PC-9 (cell line): ENCODE measurements at regions of chr11 and their contacts with region 1.

Region 1: GRCh38 chr11:81497202-81497804 is 1236.4 kb downstream of the FAM181B start:
- DNase-seq: peak; percentile 2 to 40
- H3K4me3 ChIP-seq: no peak overlapping the region
- H3K27ac ChIP-seq: no peak overlapping the region
- H3K4me1 ChIP-seq: no peaks in the 10 kb centered on the region
- H3K27me3 ChIP-seq: no peaks in the 10 kb centered on the region
- CTCF ChIP-seq: peak; percentile 91

Region 2: DNA sequence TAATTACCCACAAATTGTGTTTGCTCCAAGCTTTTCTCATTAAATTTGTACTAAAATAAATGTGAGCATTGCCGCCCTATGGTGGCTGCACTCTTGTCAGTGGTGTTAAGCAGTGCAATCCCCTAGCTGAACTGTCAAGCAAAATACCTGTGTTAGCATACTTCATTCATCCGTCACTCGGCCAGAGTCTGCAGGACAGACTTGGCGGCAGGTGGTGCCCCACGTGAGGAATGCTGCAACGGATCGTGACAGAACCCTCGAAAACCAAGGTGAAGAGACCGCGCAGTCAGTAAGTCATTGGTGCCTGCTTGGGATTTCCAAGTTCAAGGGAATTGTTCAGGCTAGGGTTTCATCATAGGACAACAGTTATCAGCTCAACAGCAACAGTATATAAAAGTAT is 464.4 kb before region 1 on chr11:
- CTCF ChIA-PET with region 1: interaction called, 10 read pairs
- POLR2A ChIA-PET with region 1: no interaction called
- intact Hi-C with region 1: no loop called
- DNase-seq: no peak
- H3K4me3 ChIP-seq: no peak overlapping the region
- H3K27ac ChIP-seq: no peak overlapping the region
- H3K4me1 ChIP-seq: no peaks in the 10 kb centered on the region
- H3K27me3 ChIP-seq: no peaks in the 10 kb centered on the region
- CTCF ChIP-seq: no peak

Region 3: DNA sequence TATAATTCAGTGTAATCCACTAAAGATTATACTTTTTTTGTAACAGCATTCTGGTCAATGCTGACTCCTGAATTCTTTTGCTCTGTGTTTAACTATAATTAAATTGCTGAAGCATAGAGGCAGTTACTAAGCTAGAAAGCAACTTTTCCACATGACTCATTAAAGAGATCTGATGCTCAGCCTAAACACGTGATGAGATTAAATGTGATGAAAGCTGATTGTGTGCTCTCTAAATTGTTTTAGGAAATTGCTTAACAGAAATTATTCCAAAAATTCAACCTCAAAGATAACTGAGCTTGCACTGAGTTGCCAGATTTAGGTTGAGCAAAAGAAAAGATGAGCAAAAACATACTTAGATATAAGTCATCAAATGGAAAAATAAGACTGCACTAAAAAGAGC is 202.8 kb after region 1 on chr11:
- CTCF ChIA-PET with region 1: no interaction called
- POLR2A ChIA-PET with region 1: no interaction called
- intact Hi-C with region 1: no loop called
- DNase-seq: no peak
- H3K4me3 ChIP-seq: no peak overlapping the region
- H3K27ac ChIP-seq: no peak overlapping the region
- H3K4me1 ChIP-seq: no peaks in the 10 kb centered on the region
- H3K27me3 ChIP-seq: no peaks in the 10 kb centered on the region
- CTCF ChIP-seq: no peak